ENCODE measurements at regions of chr6 and their contacts with region 1.

Region 1: GRCh38 chr6:149513915-149514314 is 29.1 kb upstream of the ZC3H12D start:
- DNase-seq: peak; percentile 7
- H3K4me3 ChIP-seq: no peak overlapping the region
- CTCF ChIP-seq: no peak

Region 2: GRCh38 chr6:149028767-149029405 is 485.0 kb before region 1 on chr6:
- in situ Hi-C with region 1: loop called (anchors 25 kb)
- DNase-seq: peak; percentile 95
- H3K4me3 ChIP-seq: no peak overlapping the region
- CTCF ChIP-seq: peak; percentile 22

Region 3: DNA sequence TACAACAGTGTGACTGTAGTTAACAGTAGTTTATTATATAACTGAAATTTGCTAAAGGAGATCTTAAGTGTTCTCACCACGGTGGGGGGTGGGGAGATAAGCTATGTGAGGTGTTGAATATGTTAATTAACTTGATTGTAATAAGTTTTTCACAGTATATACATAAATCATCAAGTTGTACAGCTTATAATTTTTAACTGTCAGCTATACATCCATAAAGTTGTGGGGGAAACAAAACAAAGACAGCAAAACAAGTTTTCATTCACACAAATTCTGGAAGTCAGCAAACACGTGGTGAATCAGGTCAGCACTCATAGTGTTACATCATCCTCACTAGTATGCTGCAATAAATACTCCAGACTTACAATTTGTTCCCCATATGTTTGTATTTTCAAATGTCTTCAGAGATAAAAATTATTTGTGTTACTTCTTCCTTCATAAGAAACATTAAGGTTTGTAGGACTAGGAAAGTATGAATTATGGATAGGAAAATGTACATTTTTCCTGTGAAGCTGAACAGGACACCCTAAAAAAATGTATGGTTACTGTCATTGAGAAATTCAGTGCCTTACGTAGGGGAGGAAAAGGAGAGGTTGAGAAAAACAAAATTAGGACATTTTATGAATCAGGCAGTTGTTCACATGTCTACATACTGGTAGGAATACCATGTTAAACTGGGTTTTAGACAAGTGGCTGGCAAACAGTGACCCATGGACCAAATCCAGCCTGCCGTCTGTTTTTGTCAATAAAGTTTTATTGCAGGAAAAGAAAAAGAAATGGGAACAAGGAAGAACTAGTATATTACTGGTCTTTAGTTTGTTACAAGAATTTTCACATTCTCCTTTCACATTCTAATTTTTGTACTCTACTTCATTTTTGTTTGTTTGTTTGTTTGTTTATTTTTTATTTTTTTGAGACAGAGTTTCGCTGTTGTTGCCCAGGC is 107.8 kb before region 1 on chr6:
- in situ Hi-C with region 1: loop called (anchors 25 kb)
- DNase-seq: peak; percentile 18
- H3K4me3 ChIP-seq: no peak overlapping the region
- CTCF ChIP-seq: no peak

Measured in astrocyte of the spinal cord (primary cell).